B cell (primary cell): ENCODE measurements at regions of chr12 and their contacts with region 1.

Region 1: DNA sequence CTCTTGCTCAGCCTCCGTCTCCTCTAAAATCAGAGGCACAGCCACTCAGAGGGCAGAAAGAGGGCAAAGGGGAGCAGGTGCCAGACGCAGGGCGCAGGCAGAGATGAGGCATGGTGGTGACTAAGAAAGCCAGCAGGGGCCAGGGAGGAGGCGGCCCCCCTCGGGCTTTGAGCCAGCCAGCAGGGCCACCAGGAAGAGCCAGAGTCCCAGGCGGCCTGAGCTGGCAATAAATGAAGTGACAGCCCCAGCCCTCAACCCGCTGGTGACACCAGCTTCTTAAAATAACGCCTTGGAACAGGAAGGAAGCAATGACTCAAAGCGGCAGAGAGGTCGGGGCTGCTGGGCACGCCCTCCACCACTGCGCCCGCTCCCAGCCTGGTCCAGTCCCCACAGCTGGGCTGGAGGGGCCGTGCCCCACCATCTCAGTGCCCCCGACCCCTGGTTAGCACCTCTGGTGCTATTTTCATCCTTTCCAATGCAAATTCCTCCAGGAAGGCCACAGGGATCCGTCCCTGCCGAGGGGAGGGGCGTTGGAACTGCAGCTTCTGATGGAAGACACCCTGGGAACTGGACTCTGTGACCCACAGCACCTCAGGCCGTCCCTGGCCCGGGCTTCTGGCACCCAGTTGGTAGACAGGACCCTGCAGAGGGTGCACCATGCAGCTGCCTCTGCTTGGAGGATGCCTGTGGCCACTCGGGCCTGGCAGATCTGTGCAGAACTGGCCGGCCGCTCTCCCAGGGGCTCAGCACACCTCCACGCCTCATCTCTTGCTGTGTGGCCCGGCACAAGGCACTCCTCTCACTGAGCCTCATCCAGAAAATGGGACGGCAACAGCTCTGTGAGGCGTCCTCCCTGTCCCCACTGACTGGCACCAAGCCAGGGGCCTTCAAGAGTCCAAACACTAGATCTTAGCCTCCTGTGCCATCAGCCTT is 113.7 kb downstream of the NCOR2 start:
- DNase-seq: peak; percentile 85
- ATAC-seq: peak; percentile 74
- H3K4me3 ChIP-seq: peak overlapping the region in 4 of 5 experiments; percentile 21 to 45 (median 42)
- H3K4me3 Mint-ChIP-seq: peak overlapping the region; percentile 72
- H3K27ac ChIP-seq: peak overlapping the region; percentile 88
- H3K27ac Mint-ChIP-seq: peak overlapping the region; percentile 82
- H3K4me1 ChIP-seq: peaks cover 44 to 73% of the 10 kb centered on the region in 2 donors
- H3K4me1 Mint-ChIP-seq: peaks cover 66% of the 10 kb centered on the region
- H3K27me3 ChIP-seq: no peaks in the 10 kb centered on the region
- H3K27me3 Mint-ChIP-seq: no peaks in the 10 kb centered on the region
- CTCF ChIP-seq: peak; percentile 28

Region 2: GRCh38 chr12:123097561-123098084 is 1356.1 kb before region 1 on chr12:
- CTCF ChIA-PET with region 1: no interaction called
- POLR2A ChIA-PET with region 1: no interaction called
- intact Hi-C with region 1: no loop called
- DNase-seq: no peak
- ATAC-seq: no peak
- H3K4me3 ChIP-seq: no peak overlapping the region
- H3K4me3 Mint-ChIP-seq: no peak overlapping the region
- H3K27ac ChIP-seq: no peak overlapping the region
- H3K27ac Mint-ChIP-seq: no peak overlapping the region
- H3K4me1 ChIP-seq: peaks cover 6 to 22% of the 10 kb centered on the region in 2 donors
- H3K4me1 Mint-ChIP-seq: peaks cover 27% of the 10 kb centered on the region
- H3K27me3 ChIP-seq: no peaks in the 10 kb centered on the region
- H3K27me3 Mint-ChIP-seq: no peaks in the 10 kb centered on the region
- CTCF ChIP-seq: no peak

Region 3: GRCh38 chr12:123645878-123646277 is 807.8 kb before region 1 on chr12:
- CTCF ChIA-PET with region 1: no interaction called
- POLR2A ChIA-PET with region 1: no interaction called
- intact Hi-C with region 1: no loop called
- DNase-seq: no peak
- ATAC-seq: no peak
- H3K4me3 ChIP-seq: no peak overlapping the region
- H3K4me3 Mint-ChIP-seq: no peak overlapping the region
- H3K27ac ChIP-seq: no peak overlapping the region
- H3K27ac Mint-ChIP-seq: no peak overlapping the region
- H3K4me1 ChIP-seq: no peaks in the 10 kb centered on the region
- H3K4me1 Mint-ChIP-seq: no peaks in the 10 kb centered on the region
- H3K27me3 ChIP-seq: no peaks in the 10 kb centered on the region
- H3K27me3 Mint-ChIP-seq: no peaks in the 10 kb centered on the region
- CTCF ChIP-seq: no peak

Region 4: GRCh38 chr12:124391340-124392261 is 62.1 kb before region 1 on chr12:
- CTCF ChIA-PET with region 1: interaction called, 3 read pairs
- POLR2A ChIA-PET with region 1: no interaction called
- intact Hi-C with region 1: loop called (anchors 1 kb)
- DNase-seq: peak; percentile 88
- ATAC-seq: peak; percentile 74
- H3K4me3 ChIP-seq: peak overlapping the region; percentile 26 to 63 (median 31)
- H3K4me3 Mint-ChIP-seq: peak overlapping the region; percentile 94
- H3K27ac ChIP-seq: peak overlapping the region; percentile 63 to 86
- H3K27ac Mint-ChIP-seq: peak overlapping the region; percentile 74
- H3K4me1 ChIP-seq: peaks cover 39 to 49% of the 10 kb centered on the region in 2 donors
- H3K4me1 Mint-ChIP-seq: peaks cover 39% of the 10 kb centered on the region
- H3K27me3 ChIP-seq: no peaks in the 10 kb centered on the region
- H3K27me3 Mint-ChIP-seq: no peaks in the 10 kb centered on the region
- CTCF ChIP-seq: no peak

Region 5: GRCh38 chr12:124493809-124494750 is 40.4 kb after region 1 on chr12:
- CTCF ChIA-PET with region 1: interaction called, 4 read pairs
- POLR2A ChIA-PET with region 1: interaction called, 4 read pairs
- intact Hi-C with region 1: loop called (anchors 1 kb)
- DNase-seq: peak; percentile 75
- ATAC-seq: peak; percentile 89
- H3K4me3 ChIP-seq: peak overlapping the region in 1 of 5 experiments; percentile 7
- H3K4me3 Mint-ChIP-seq: peak overlapping the region; percentile 83
- H3K27ac ChIP-seq: peak overlapping the region; percentile 32 to 75
- H3K27ac Mint-ChIP-seq: peak overlapping the region; percentile 86
- H3K4me1 ChIP-seq: peaks cover 33 to 69% of the 10 kb centered on the region in 2 donors
- H3K4me1 Mint-ChIP-seq: peaks cover 68% of the 10 kb centered on the region
- H3K27me3 ChIP-seq: no peaks in the 10 kb centered on the region
- H3K27me3 Mint-ChIP-seq: no peaks in the 10 kb centered on the region
- CTCF ChIP-seq: no peak

Region 6: DNA sequence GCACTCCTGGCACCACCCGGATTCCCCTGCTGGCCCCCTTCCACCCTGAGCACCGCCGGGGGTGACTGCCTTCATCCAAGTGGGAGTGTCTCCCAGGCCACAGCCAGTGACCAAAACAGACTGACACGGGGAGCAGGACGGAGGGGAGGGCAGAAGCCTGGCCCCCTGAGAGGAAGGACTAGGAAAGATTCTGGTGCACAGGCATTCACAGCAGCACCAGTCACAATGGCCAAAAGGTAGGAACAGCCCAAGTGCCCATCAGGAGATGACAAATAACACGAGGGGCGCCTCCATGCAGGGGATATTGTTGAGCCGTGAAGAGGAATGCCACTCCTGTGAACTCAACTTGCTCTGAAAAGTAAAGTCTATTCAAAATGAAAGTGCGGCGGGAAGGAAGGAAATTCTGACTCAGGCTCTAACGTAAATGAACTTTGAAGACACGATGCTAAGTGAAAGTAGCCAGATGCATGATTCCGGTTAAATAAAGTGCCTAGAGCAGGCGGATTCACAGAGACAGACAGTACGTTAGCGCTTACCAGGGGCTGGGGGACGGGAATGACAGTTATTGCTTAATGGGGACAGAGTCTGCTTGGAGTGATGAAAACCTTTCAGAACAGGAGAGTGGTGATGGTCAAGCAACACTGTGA is 259.9 kb after region 1 on chr12:
- CTCF ChIA-PET with region 1: no interaction called
- POLR2A ChIA-PET with region 1: no interaction called
- intact Hi-C with region 1: loop called (anchors 1 kb)
- DNase-seq: peak; percentile 65
- ATAC-seq: peak; percentile 80
- H3K4me3 ChIP-seq: peak overlapping the region in 3 of 5 experiments; percentile 41 to 72 (median 49)
- H3K4me3 Mint-ChIP-seq: peak overlapping the region; percentile 73
- H3K27ac ChIP-seq: peak overlapping the region; percentile 52 to 76
- H3K27ac Mint-ChIP-seq: peak overlapping the region; percentile 70
- H3K4me1 ChIP-seq: peaks cover 16 to 17% of the 10 kb centered on the region in 2 donors
- H3K4me1 Mint-ChIP-seq: peaks cover 16% of the 10 kb centered on the region
- H3K27me3 ChIP-seq: no peaks in the 10 kb centered on the region
- H3K27me3 Mint-ChIP-seq: no peaks in the 10 kb centered on the region
- CTCF ChIP-seq: no peak

Region 7: GRCh38 chr12:124852329-124852831 is 398.7 kb after region 1 on chr12:
- CTCF ChIA-PET with region 1: no interaction called
- POLR2A ChIA-PET with region 1: no interaction called
- intact Hi-C with region 1: no loop called
- DNase-seq: no peak
- ATAC-seq: no peak
- H3K4me3 ChIP-seq: no peak overlapping the region
- H3K4me3 Mint-ChIP-seq: no peak overlapping the region
- H3K27ac ChIP-seq: no peak overlapping the region
- H3K27ac Mint-ChIP-seq: no peak overlapping the region
- H3K4me1 ChIP-seq: peaks cover 7 to 14% of the 10 kb centered on the region in 2 donors
- H3K4me1 Mint-ChIP-seq: peaks cover 18% of the 10 kb centered on the region
- H3K27me3 ChIP-seq: no peaks in the 10 kb centered on the region
- H3K27me3 Mint-ChIP-seq: no peaks in the 10 kb centered on the region
- CTCF ChIP-seq: no peak

Region 8: GRCh38 chr12:124917135-124917840 is 463.6 kb after region 1 on chr12:
- CTCF ChIA-PET with region 1: no interaction called
- POLR2A ChIA-PET with region 1: no interaction called
- intact Hi-C with region 1: loop called (anchors 10 kb)
- DNase-seq: peak; percentile 97
- ATAC-seq: peak; percentile 59
- H3K4me3 ChIP-seq: peak overlapping the region; percentile 36 to 73 (median 51)
- H3K4me3 Mint-ChIP-seq: peak overlapping the region; percentile 88
- H3K27ac ChIP-seq: peak overlapping the region; percentile 93 to 95
- H3K27ac Mint-ChIP-seq: peak overlapping the region; percentile 97
- H3K4me1 ChIP-seq: peaks cover 74 to 80% of the 10 kb centered on the region in 2 donors
- H3K4me1 Mint-ChIP-seq: peaks cover 88% of the 10 kb centered on the region
- H3K27me3 ChIP-seq: no peaks in the 10 kb centered on the region
- H3K27me3 Mint-ChIP-seq: no peaks in the 10 kb centered on the region
- CTCF ChIP-seq: no peak

Region 9: GRCh38 chr12:125159683-125160082 is 706.0 kb after region 1 on chr12:
- CTCF ChIA-PET with region 1: no interaction called
- POLR2A ChIA-PET with region 1: no interaction called
- intact Hi-C with region 1: no loop called
- DNase-seq: no peak
- ATAC-seq: no peak
- H3K4me3 ChIP-seq: no peak overlapping the region
- H3K4me3 Mint-ChIP-seq: no peak overlapping the region
- H3K27ac ChIP-seq: no peak overlapping the region
- H3K27ac Mint-ChIP-seq: no peak overlapping the region
- H3K4me1 ChIP-seq: no peaks in the 10 kb centered on the region
- H3K4me1 Mint-ChIP-seq: no peaks in the 10 kb centered on the region
- H3K27me3 ChIP-seq: no peaks in the 10 kb centered on the region
- H3K27me3 Mint-ChIP-seq: peaks cover 3% of the 10 kb centered on the region
- CTCF ChIP-seq: no peak